ENCODE measurements at regions of chr14 and their contacts with region 1.

Region 1: DNA sequence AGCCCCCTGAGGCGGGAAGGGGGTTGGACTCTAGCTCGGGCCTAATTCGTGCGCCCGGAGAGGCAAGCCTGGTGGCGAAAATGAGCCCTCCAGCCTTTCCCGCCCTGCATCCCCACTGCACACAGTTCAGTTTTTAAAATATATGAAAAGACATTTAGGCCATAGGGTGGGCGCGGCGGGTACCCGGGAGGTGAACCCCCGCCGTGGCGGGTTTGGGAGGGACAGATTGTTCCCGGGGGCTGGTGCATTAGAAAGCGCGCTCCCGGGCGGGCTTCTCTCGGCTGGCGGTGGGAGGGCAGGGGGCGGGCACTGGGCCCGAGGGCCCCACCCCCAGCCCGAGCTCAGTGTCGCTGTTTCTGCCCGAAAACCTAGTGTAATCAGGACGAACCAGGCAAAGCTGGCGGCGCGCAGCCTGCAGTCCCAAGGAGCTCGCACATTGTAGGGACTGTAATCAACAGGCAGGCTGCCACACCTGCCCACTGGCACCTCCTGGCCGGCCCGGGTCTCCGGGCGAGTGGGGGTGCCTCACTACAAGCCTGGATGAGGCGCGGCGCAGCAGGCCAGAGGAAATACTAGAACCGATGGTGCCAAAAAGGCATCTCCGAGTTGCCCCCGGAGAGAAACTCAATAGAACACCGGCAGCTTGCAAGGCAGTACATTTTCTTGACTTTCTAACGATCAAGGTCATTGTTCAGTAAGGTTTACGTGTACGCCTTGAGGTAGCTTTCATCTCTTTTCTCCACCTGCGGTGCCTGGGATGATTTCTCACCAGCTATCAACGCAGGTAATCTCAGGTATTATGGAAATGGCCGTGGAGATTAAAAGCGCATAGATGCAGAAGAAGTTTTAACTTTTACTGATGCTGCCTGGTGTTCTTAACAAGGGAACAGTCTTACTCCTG is 764 bp upstream of the SPTB start:
- DNase-seq: peak; percentile 66
- H3K4me3 Mint-ChIP-seq: peak overlapping the region; percentile 79
- H3K27ac Mint-ChIP-seq: no peak overlapping the region
- H3K4me1 Mint-ChIP-seq: peaks cover 16% of the 10 kb centered on the region
- H3K27me3 Mint-ChIP-seq: peaks cover 68% of the 10 kb centered on the region

Region 2: DNA sequence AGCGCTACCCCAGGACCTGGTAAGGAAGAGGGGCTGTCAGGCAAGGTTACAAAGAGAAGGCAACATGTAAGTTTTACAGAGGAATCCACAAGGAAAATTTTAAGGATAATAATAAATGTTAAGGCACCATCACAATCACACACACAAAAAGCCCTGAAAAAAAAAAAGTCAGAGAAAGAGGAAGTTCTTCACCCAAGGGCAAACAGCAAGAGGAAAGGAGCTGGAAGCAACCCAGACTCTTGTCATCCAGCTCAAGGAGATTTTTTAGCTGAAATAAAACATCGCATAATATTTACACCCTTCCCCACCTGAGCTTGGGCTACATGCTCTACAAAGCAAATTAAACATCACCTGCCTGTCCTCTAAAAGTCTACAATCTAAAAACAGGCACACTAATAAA is 10.3 kb before region 1 on chr14:
- CTCF ChIA-PET with region 1: interaction called, 22 read pairs
- POLR2A ChIA-PET with region 1: no interaction called
- DNase-seq: no peak
- H3K4me3 Mint-ChIP-seq: no peak overlapping the region
- H3K27ac Mint-ChIP-seq: no peak overlapping the region
- H3K4me1 Mint-ChIP-seq: no peaks in the 10 kb centered on the region
- H3K27me3 Mint-ChIP-seq: peaks cover 44% of the 10 kb centered on the region